Breast epithelium (tissue), 4 donors: ENCODE measurements at regions of chr11 and their contacts with region 1.

Region 1: GRCh38 chr11:18501629-18502028 is 25.1 kb downstream of the TSG101 start:
- DNase-seq: no peak
- H3K4me3 ChIP-seq: no peak overlapping the region
- H3K27ac ChIP-seq: no peak overlapping the region
- H3K4me1 ChIP-seq: no peaks in the 10 kb centered on the region
- H3K27me3 ChIP-seq: no peaks in the 10 kb centered on the region
- CTCF ChIP-seq: no peak
- POLR2A ChIP-seq: no peak

Region 2: GRCh38 chr11:18449251-18449650 is 52.4 kb before region 1 on chr11:
- intact Hi-C with region 1: loop called (anchors 2 kb)
- DNase-seq: no peak
- H3K4me3 ChIP-seq: no peak overlapping the region
- H3K27ac ChIP-seq: no peak overlapping the region
- H3K4me1 ChIP-seq: no peaks in the 10 kb centered on the region
- H3K27me3 ChIP-seq: no peaks in the 10 kb centered on the region
- CTCF ChIP-seq: no peak
- POLR2A ChIP-seq: no peak